ENCODE measurements at regions of chr10 and their contacts with region 1.

Region 1: DNA sequence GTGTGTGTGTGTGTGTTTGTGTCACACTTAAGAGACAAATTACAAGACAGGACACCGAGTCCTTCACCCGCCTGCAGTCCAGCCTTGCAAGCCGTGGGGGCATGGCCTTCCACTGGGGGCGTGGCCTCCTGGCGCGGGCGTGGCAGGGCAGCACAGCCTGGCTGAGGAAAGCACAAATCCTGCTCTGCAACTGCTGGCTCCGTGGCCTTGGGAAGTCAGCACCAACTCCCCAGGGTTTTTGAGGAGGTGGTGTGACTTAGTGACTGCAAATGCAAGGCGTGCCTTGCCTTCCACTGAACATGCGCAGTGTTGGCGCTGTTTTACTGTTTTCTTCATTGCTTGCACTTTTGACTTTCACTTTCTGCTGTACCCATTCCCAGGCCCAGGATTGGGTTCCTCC is 12.9 kb upstream of the BMS1 start:
- DNase-seq: no peak

Region 2: GRCh38 chr10:42744134-42744692 is 25.4 kb before region 1 on chr10:
- intact Hi-C with region 1: loop called in 1 of 2 experiments (anchors 1 kb)
- DNase-seq: no peak